ENCODE measurements at regions of chr5 and their contacts with region 1.

Region 1: DNA sequence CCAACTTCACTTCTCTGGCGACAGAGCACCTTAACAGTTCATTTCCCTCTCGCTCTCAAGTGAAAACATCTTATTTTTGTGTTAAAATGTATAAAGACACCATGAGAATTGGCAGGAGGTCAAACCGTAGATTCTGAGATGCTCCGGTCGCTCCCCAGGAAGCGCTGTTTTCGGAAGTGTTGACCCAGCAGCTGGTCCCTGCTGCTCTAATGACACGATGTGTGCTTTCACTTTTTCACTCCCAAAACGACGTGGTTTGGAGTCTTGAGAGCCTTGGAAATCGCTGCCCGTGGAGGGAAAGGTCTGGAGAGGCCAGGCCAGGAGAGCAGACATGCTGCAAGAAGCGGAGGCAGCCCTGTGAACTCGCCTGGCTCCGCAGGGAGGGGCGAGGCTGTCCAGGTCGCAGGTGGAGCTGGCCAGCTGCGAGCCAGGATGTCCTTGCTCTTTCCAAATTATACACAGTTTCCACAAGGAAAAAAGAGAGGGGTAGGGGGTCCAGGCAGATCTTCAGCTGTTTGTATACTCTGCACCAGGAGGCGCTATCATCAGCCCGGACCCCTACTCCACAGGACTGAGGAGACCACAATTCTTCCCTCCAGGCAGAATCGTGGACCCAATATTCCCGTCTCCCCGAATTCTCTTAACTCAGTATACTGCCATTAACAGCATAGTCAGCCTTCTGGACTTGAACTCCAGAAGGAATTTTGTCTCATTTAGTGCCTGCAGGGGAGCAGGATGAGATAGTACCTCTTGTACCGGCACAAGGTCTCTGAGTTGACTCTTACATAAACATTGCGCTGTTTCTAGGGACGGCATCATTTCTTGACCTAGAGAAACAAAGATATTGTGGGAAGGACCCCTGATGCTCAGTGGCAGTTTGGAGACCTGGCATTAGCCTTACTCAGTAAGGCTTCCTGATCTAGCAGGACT is 248.6 kb upstream of the ANKRD55 start:
- DNase-seq: peak in 6 of 10 donors; percentile 7 to 82 (median 20)

Region 2: GRCh38 chr5:56270568-56271392 is 210.9 kb before region 1 on chr5:
- intact Hi-C with region 1: loop called (anchors 10 kb)
- DNase-seq: peak; percentile 54 to 97 (median 80)

Region 3: GRCh38 chr5:56814963-56815658 is 333.4 kb after region 1 on chr5 and contains the start of gene MAP3K1:
- intact Hi-C with region 1: loop called (anchors 2 kb)
- DNase-seq: peak; percentile 58 to 96 (median 73)

Measured in posterior cingulate gyrus (tissue), 11 donors.